ENCODE measurements at regions of chr10 and their contacts with region 1.

Region 1: GRCh38 chr10:6920072-6921019 is 340.3 kb upstream of the PRKCQ start:
- DNase-seq: peak; percentile 87
- H3K4me3 Mint-ChIP-seq: no peak overlapping the region
- H3K27ac Mint-ChIP-seq: no peak overlapping the region
- H3K4me1 Mint-ChIP-seq: peaks cover 10% of the 10 kb centered on the region
- H3K27me3 Mint-ChIP-seq: no peaks in the 10 kb centered on the region

Region 2: GRCh38 chr10:6279540-6280267 is 640.6 kb before region 1 on chr10:
- CTCF ChIA-PET with region 1: no interaction called
- POLR2A ChIA-PET with region 1: no interaction called
- intact Hi-C with region 1: no loop called
- DNase-seq: no peak
- H3K4me3 Mint-ChIP-seq: no peak overlapping the region
- H3K27ac Mint-ChIP-seq: no peak overlapping the region
- H3K4me1 Mint-ChIP-seq: peaks cover 40% of the 10 kb centered on the region
- H3K27me3 Mint-ChIP-seq: no peaks in the 10 kb centered on the region

Region 3: DNA sequence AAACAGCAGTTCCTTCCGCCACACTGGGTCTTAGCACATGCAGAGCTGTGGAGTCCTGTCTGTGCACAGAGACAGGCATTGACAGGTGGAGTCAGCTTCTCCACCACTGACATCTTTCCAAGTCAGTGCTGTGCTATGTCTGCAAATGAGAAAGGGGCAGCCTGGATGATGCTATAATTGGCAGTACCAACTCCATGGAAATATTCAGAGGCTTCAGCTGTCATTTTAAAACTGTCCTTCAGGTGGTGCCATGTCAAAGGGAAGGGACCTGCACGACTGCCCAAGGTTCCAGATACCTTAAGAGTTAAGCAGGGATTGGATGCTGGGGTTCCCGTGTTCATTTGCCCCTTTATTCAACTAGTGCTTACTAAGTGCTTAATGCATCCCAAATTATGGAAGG is 82.2 kb before region 1 on chr10:
- CTCF ChIA-PET with region 1: interaction called, 10 read pairs
- POLR2A ChIA-PET with region 1: no interaction called
- intact Hi-C with region 1: no loop called
- DNase-seq: peak; percentile 13
- H3K4me3 Mint-ChIP-seq: no peak overlapping the region
- H3K27ac Mint-ChIP-seq: no peak overlapping the region
- H3K4me1 Mint-ChIP-seq: peaks cover 5% of the 10 kb centered on the region
- H3K27me3 Mint-ChIP-seq: peaks cover 13% of the 10 kb centered on the region

Region 4: GRCh38 chr10:6958254-6958653 is 37.9 kb after region 1 on chr10:
- CTCF ChIA-PET with region 1: no interaction called
- POLR2A ChIA-PET with region 1: no interaction called
- intact Hi-C with region 1: no loop called
- DNase-seq: no peak
- H3K4me3 Mint-ChIP-seq: no peak overlapping the region
- H3K27ac Mint-ChIP-seq: no peak overlapping the region
- H3K4me1 Mint-ChIP-seq: peaks cover 9% of the 10 kb centered on the region
- H3K27me3 Mint-ChIP-seq: peaks cover 4% of the 10 kb centered on the region

Region 5: DNA sequence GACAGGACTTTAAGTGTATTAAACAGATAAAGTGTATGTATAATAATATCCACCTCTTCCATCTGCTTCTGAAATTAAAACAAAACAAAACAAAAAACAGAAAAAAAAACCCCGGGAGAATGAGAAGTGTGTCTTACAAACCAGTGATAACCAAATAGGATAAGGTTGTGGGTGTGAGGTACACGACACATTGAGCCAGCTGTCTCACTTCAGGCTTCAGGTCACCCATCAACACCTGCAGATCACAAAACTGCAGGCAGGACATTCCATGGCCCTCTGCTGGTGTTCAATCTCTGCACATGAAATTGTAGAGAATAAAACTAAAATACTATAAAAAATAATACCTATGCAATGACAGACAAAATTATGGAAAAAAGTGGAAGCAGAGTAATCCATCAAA is 150.6 kb after region 1 on chr10:
- CTCF ChIA-PET with region 1: interaction called, 10 read pairs
- POLR2A ChIA-PET with region 1: no interaction called
- intact Hi-C with region 1: no loop called
- DNase-seq: no peak
- H3K4me3 Mint-ChIP-seq: no peak overlapping the region
- H3K27ac Mint-ChIP-seq: no peak overlapping the region
- H3K4me1 Mint-ChIP-seq: no peaks in the 10 kb centered on the region
- H3K27me3 Mint-ChIP-seq: peaks cover 9% of the 10 kb centered on the region

Region 6: DNA sequence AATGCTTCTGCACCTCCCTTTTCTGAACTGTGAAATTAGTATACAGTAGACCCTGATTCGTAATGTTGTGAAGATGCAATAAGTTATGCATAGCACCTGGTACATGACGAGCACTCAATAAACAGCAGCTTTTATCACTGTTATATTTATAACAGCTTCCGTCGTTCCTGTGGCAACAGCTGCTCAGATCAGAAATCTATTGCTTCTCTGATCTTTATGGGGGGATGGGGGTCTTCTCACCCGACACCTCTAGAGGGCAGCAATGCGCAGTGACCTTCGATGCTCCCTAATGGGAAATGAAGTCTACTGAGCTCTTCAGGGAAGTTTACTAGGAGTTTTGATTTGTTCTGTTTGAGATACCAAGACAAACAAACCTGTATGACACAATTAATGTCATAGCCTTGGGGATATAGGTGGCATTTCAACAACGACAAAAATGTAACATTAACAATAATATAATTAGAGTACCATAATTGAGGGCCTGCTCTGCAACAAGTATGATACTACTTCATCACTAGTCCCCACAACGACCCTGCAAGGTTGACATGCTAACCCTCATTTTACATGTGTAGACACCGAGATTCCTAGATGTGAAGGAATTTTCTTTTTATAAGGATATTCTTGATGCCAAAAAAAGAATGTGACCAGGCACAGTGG is 200.9 kb after region 1 on chr10:
- CTCF ChIA-PET with region 1: interaction called, 26 read pairs
- POLR2A ChIA-PET with region 1: no interaction called
- intact Hi-C with region 1: loop called (anchors 1 kb)
- DNase-seq: peak; percentile 77
- H3K4me3 Mint-ChIP-seq: no peak overlapping the region
- H3K27ac Mint-ChIP-seq: no peak overlapping the region
- H3K4me1 Mint-ChIP-seq: peaks cover 3% of the 10 kb centered on the region
- H3K27me3 Mint-ChIP-seq: peaks cover 10% of the 10 kb centered on the region

Region 7: GRCh38 chr10:7417103-7417623 is 496.8 kb after region 1 on chr10:
- CTCF ChIA-PET with region 1: interaction called, 99 read pairs
- POLR2A ChIA-PET with region 1: no interaction called
- intact Hi-C with region 1: loop called (anchors 1 kb)
- DNase-seq: no peak
- H3K4me3 Mint-ChIP-seq: no peak overlapping the region
- H3K27ac Mint-ChIP-seq: no peak overlapping the region
- H3K4me1 Mint-ChIP-seq: peaks cover 14% of the 10 kb centered on the region
- H3K27me3 Mint-ChIP-seq: peaks cover 8% of the 10 kb centered on the region